ENCODE measurements at regions of chr5 and their contacts with region 1.

Region 1: DNA sequence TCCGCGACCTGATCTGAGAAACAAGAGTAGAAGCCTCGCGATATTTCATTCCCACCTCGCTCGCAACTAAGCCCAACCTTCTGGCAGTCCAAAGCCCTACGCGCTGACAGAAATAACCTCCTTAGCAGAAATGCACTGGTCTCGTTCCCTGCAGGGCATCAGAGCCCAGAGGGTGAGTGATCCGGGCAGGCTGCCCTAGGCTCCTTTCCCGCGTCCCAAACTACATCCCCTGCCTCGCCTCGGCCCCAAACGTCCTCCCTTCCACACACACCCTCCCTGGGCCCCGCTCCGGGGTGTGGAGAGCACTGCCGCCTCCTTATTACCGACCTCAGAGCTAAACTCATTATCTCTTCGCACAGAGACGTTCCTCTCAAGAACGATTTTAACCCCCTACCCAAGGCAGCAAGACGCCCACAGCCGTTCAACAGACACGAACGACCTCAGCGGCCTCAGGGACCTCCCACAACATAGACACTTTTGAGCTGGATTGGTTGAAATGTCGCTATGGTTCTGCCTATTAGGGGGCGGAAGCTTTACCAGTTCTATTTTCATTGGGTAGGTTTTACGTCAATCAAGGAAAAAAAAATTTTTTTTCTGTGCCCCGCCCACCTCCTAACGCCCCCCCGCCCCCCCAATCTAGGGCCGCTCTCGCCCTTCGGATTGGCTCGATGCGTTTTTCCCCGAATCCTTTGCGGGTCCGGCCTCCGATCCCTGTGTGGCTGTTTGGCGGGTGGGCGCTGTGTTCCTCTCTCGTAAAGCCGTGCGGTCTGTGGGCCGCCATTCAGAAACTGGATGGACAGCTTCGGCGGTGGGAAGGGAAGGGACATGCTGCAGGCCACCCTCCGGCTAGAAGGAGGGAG is at the start of gene CETN3:
- DNase-seq: peak; percentile 93
- H3K4me3 Mint-ChIP-seq: no peak within 1 kb of the TSS
- H3K27ac Mint-ChIP-seq: no peak within 1 kb of the TSS
- H3K4me1 Mint-ChIP-seq: peaks cover 15% of the 10 kb centered on the region
- H3K27me3 Mint-ChIP-seq: no peaks in the 10 kb centered on the region
- total RNA-seq, gene CETN3: 41.9 to 45.3 TPM

Region 2: GRCh38 chr5:88502179-88503040 is 1907.1 kb before region 1 on chr5:
- CTCF ChIA-PET with region 1: no interaction called
- intact Hi-C with region 1: loop called (anchors 5 kb)
- DNase-seq: peak; percentile 20
- H3K4me3 Mint-ChIP-seq: peak overlapping the region; percentile 78
- H3K27ac Mint-ChIP-seq: peak overlapping the region; percentile 77
- H3K4me1 Mint-ChIP-seq: peaks cover 3% of the 10 kb centered on the region
- H3K27me3 Mint-ChIP-seq: no peaks in the 10 kb centered on the region

Region 3: DNA sequence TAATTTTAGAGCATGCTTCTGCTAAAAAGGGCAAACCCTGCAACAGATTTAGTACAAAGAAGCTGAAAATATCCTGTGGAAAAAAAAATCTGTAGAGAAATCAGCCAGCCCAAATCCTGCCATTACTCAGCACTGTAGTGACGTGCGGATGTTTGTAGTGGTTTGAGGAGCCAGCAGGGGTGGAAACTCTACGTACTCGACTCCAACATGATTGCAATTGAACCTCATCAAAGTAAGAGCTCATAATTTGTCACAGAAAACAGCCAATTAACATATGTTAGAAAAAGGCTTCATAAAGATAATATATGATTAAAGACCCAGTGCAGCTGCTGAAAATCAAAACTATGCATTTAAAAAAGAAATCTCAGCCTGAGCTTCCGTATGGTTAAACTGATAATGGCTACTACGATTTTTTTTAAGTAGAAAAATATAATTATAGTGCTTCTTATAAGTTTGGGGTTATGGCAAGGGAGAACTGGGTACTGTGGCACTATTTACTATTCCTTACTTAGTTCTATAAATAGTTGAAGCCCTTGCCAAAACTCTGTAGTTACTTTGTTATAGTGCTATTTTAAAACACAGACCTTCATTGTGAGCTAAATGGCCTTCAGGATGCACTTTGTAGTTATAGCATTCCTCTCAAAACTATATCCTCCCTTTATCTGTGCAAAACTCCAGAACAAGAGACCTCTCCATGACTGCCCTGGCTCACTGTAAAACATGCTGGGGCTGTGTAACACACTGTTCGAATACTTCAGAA is 1576.0 kb before region 1 on chr5:
- CTCF ChIA-PET with region 1: no interaction called
- intact Hi-C with region 1: loop called (anchors 5 kb)
- DNase-seq: peak; percentile 78
- H3K4me3 Mint-ChIP-seq: no peak overlapping the region
- H3K27ac Mint-ChIP-seq: no peak overlapping the region
- H3K4me1 Mint-ChIP-seq: peaks cover 23% of the 10 kb centered on the region
- H3K27me3 Mint-ChIP-seq: peaks cover 16% of the 10 kb centered on the region

Region 4: DNA sequence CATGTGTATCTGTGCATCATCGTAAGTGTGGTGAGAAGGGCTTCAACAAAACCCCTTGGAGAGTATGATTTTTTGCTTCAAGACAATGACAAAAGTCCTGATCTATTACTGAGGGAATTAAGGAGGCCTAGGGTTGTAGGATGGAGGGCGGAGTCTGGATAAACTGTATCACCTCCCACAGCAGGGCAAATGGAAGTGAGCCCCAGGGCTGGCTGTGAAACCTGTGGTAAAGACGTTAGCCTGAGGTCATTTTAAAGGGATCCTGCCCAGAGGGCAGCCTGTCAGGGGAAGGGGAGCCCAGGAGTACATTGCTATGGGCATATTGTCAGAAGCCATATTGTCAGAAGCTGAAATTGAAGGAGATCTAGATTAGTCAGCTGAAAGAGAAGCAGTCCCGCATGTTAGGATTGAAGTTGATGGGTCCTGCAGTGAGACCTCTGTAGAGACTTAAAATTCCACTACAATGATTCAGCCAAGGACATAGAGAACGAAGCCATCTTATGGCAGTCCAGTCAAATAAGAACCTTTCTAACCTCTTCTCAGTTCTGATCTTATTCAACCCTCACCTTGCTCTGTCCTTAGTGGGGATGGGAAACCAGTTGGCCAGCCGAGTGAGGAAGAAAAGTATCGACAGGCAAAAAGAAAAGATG is 175.9 kb after region 1 on chr5:
- CTCF ChIA-PET with region 1: no interaction called
- intact Hi-C with region 1: no loop called
- DNase-seq: no peak
- H3K4me3 Mint-ChIP-seq: no peak overlapping the region
- H3K27ac Mint-ChIP-seq: no peak overlapping the region
- H3K4me1 Mint-ChIP-seq: no peaks in the 10 kb centered on the region
- H3K27me3 Mint-ChIP-seq: peaks cover 32% of the 10 kb centered on the region

Measured in activated naive CD4-positive, alpha-beta T cell treated with anti-CD3 and anti-CD28 coated beads for 36 hours (primary cell).